ENCODE measurements at regions of chr17 and their contacts with region 1.

Region 1: GRCh38 chr17:43570518-43570928 is 24.4 kb upstream of the ETV4 start:
- DNase-seq: no peak
- H3K4me3 ChIP-seq: no peak overlapping the region
- H3K27ac ChIP-seq: no peak overlapping the region
- H3K4me1 ChIP-seq: no peaks in the 10 kb centered on the region
- H3K27me3 ChIP-seq: no peaks in the 10 kb centered on the region
- CTCF ChIP-seq: no peak

Region 2: DNA sequence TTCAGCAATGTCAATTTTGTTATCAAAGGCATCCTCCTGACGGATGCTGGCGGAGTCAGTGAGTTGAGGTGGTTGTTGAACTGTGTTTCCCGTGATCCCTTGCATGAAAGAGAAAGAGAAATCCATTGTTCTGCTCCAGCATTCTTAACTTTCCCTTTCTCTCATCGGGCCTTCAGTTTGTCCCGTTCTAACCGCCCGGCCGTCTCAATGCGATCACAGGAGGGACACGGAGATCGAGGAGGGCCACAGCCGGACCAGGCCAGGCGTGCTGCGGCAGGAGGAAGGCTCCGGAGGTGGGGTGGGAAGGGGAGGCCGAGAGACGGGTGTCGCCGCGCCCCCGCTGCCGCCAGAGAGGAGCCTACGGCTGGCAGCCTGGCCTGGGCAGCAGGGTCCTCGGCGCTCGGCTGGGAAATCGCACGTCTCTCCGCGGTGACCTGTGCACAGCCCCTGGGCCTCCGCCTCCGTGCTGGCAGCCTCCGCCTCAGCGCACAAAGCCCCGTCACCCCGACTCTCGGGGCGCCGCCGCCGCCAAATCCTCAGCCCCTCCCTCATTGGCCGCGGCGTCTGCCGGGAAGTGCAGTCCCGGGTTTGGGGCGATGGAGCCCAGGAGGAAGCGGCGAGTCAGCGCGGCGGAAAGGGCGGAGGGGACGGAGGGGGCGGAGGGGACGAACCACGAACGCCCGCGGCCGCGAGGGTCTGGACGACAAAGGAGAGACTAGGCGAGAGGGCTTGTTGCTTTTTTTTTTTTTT is 150.0 kb after region 1 on chr17:
- CTCF ChIA-PET with region 1: no interaction called
- POLR2A ChIA-PET with region 1: interaction called, 10 read pairs
- intact Hi-C with region 1: no loop called
- DNase-seq: peak; percentile 67
- H3K4me3 ChIP-seq: peak overlapping the region; percentile 51
- H3K27ac ChIP-seq: peak overlapping the region; percentile 42
- H3K4me1 ChIP-seq: no peaks in the 10 kb centered on the region
- H3K27me3 ChIP-seq: no peaks in the 10 kb centered on the region
- CTCF ChIP-seq: no peak

Measured in A673 (cell line).